Esophagus muscularis mucosa (tissue), 4 donors: ENCODE measurements at regions of chr12 and their contacts with region 1.

Region 1: GRCh38 chr12:70365648-70366518 is at the start of gene KCNMB4:
- DNase-seq: no peak
- H3K4me3 ChIP-seq: peak within 1 kb of the TSS; percentile 74 to 79 (median 75)
- H3K27ac ChIP-seq: peak within 1 kb of the TSS; percentile 41 to 52 (median 48)
- H3K4me1 ChIP-seq: peaks cover 7 to 25% (median 23%) of the 10 kb centered on the region in 4 donors
- H3K27me3 ChIP-seq: peaks cover 0 to 46% (median 18%) of the 10 kb centered on the region in 4 donors
- CTCF ChIP-seq: no peak
- EP300 ChIP-seq: no peak
- POLR2A ChIP-seq: no peak
- total RNA-seq, gene KCNMB4: 6.6 to 10.3 (median 8.0) TPM

Region 2: DNA sequence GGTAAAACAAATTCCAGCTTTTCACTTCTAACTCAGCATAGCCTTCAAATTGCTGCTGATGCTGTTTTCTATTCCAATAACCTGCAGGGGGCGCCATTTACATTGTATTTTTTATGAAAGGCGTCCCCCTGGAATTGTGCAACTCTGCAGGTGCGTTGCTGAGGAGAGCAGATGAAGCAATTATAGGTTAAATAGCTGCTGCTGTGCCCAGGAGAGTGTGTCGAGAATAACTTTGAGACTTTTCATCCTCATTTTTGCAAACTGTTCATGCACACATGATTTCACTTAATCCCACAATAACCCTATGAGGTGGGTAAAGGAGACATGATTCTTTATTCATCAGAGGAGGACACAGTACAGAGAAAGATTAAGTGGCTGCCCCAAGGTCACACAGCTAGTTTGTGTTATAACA is 465.2 kb before region 1 on chr12:
- intact Hi-C with region 1: loop called (anchors 5 kb)
- DNase-seq: no peak
- H3K4me3 ChIP-seq: no peak overlapping the region
- H3K27ac ChIP-seq: no peak overlapping the region
- H3K4me1 ChIP-seq: peaks cover 0 to 8% (median 2%) of the 10 kb centered on the region in 4 donors
- H3K27me3 ChIP-seq: no peaks in the 10 kb centered on the region
- CTCF ChIP-seq: peak; percentile 68 to 78 (median 78)
- EP300 ChIP-seq: no peak
- POLR2A ChIP-seq: no peak

Region 3: GRCh38 chr12:70242695-70243509 is 123.0 kb before region 1 on chr12 and contains the start of gene CNOT2:
- intact Hi-C with region 1: loop called (anchors 10 kb)
- DNase-seq: peak; percentile 97
- H3K4me3 ChIP-seq: peak within 1 kb of the TSS; percentile 85 to 97 (median 90)
- H3K27ac ChIP-seq: peak within 1 kb of the TSS; percentile 93 to 98 (median 96)
- H3K4me1 ChIP-seq: peaks cover 44 to 49% (median 47%) of the 10 kb centered on the region in 4 donors
- H3K27me3 ChIP-seq: no peaks in the 10 kb centered on the region
- CTCF ChIP-seq: no peak
- EP300 ChIP-seq: no peak
- POLR2A ChIP-seq: no peak
- total RNA-seq, gene CNOT2: 55.6 to 87.6 (median 82.7) TPM